ENCODE measurements at regions of chr7 and their contacts with region 1.

Region 1: GRCh38 chr7:102834999-102835398 is 77.8 kb upstream of the LRRC17 start:
- DNase-seq: peak; percentile 73
- H3K4me3 ChIP-seq: no peak overlapping the region
- H3K27ac ChIP-seq: peak overlapping the region; percentile 70
- H3K4me1 ChIP-seq: peaks cover 27% of the 10 kb centered on the region
- H3K27me3 ChIP-seq: no peaks in the 10 kb centered on the region
- CTCF ChIP-seq: no peak
- POLR2A ChIP-seq: no peak

Region 2: DNA sequence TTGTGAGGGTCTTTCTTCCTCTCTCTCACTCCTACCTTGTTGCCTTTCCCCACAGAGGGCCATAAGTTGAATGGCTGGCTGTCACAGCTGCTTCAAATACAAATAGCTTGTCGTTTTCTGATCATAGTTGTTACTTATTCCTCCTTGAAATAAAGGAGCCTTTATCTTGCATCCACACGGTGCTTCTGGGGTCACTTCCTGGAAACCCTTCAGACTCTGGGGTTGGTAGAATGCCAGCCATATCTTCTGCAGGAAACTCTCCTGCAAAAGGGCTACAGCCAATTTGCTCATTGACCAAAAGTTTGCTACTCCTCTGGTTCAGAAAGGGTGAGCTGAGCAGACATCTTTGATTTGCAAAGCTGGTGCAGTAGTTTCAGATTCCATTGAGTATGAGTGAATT is 15.8 kb before region 1 on chr7:
- CTCF ChIA-PET with region 1: interaction called, 5 read pairs
- POLR2A ChIA-PET with region 1: no interaction called
- dilution Hi-C with region 1: no loop called
- intact Hi-C with region 1: loop called (anchors 1 kb)
- DNase-seq: peak; percentile 89
- H3K4me3 ChIP-seq: no peak overlapping the region
- H3K27ac ChIP-seq: peak overlapping the region; percentile 25
- H3K4me1 ChIP-seq: peaks cover 25% of the 10 kb centered on the region
- H3K27me3 ChIP-seq: no peaks in the 10 kb centered on the region
- CTCF ChIP-seq: no peak
- POLR2A ChIP-seq: no peak

Region 3: GRCh38 chr7:102933763-102934162 is 98.8 kb after region 1 on chr7:
- CTCF ChIA-PET with region 1: no interaction called
- POLR2A ChIA-PET with region 1: no interaction called
- dilution Hi-C with region 1: no loop called
- intact Hi-C with region 1: no loop called
- DNase-seq: no peak
- H3K4me3 ChIP-seq: no peak overlapping the region
- H3K27ac ChIP-seq: no peak overlapping the region
- H3K4me1 ChIP-seq: peaks cover 9% of the 10 kb centered on the region
- H3K27me3 ChIP-seq: no peaks in the 10 kb centered on the region
- CTCF ChIP-seq: no peak
- POLR2A ChIP-seq: no peak